B cell (primary cell): ENCODE measurements at regions of chr5 and their contacts with region 1.

Region 1: DNA sequence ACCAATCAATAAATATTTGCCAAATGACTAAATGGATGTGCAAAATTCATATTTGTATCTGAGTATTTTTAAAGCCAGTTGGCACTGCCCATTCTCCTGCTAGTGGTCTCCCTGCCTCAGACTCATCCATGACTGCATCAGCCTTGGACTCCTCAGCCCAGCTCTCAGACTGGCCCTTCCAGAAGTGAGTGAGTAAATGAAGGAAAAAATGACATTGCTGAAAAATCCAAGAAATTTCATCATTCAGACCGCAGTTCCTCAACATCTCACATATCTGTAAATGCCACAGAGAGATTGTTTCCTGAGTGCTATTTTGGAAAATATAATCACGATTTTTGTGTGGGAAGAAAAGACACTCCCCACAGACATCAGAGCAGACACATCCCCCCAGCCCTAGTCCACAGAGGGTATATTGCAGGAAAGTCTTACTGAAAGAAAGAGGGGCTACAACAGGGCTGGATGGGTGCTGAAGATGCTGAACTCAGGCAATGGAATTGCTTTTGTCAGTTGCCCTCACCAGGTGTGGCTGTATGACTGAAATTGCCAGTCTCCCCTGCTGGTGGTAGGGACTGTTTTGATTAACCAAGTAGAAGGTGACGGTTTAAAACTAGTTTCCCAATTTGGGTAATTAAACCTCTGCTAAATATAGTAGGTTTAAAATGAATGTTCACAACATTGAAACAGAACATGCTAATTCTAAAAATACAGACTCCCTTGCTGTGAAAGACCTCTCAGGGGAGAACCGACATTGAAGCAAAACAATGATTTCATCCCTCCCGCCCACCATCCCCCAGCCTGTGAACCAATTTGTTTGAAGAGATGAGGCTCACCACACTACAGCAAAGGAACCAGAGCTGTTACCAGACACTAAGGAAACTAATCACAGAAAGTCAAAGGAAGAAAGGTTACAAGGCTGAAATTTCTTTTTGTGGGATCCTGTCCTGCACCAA is 158.8 kb downstream of the DEPDC1B start:
- DNase-seq: peak; percentile 84
- ATAC-seq: peak; percentile 81
- H3K4me3 ChIP-seq: peak overlapping the region in 3 of 5 experiments; percentile 11 to 21 (median 16)
- H3K4me3 Mint-ChIP-seq: peak overlapping the region; percentile 64
- H3K27ac ChIP-seq: peak overlapping the region; percentile 73 to 82
- H3K27ac Mint-ChIP-seq: peak overlapping the region; percentile 70
- H3K4me1 ChIP-seq: peaks cover 40 to 56% of the 10 kb centered on the region in 2 donors
- H3K4me1 Mint-ChIP-seq: peaks cover 58% of the 10 kb centered on the region
- H3K27me3 ChIP-seq: no peaks in the 10 kb centered on the region
- H3K27me3 Mint-ChIP-seq: no peaks in the 10 kb centered on the region
- CTCF ChIP-seq: no peak

Region 2: GRCh38 chr5:60494635-60495034 is 46.5 kb before region 1 on chr5:
- CTCF ChIA-PET with region 1: no interaction called
- POLR2A ChIA-PET with region 1: no interaction called
- intact Hi-C with region 1: loop called (anchors 5 kb)
- DNase-seq: peak; percentile 62
- ATAC-seq: peak; percentile 82
- H3K4me3 ChIP-seq: no peak overlapping the region
- H3K4me3 Mint-ChIP-seq: peak overlapping the region; percentile 26
- H3K27ac ChIP-seq: peak overlapping the region in 1 of 2 donors; percentile 37
- H3K27ac Mint-ChIP-seq: no peak overlapping the region
- H3K4me1 ChIP-seq: peaks cover 24 to 26% of the 10 kb centered on the region in 2 donors
- H3K4me1 Mint-ChIP-seq: peaks cover 37% of the 10 kb centered on the region
- H3K27me3 ChIP-seq: no peaks in the 10 kb centered on the region
- H3K27me3 Mint-ChIP-seq: no peaks in the 10 kb centered on the region
- CTCF ChIP-seq: no peak

Region 3: DNA sequence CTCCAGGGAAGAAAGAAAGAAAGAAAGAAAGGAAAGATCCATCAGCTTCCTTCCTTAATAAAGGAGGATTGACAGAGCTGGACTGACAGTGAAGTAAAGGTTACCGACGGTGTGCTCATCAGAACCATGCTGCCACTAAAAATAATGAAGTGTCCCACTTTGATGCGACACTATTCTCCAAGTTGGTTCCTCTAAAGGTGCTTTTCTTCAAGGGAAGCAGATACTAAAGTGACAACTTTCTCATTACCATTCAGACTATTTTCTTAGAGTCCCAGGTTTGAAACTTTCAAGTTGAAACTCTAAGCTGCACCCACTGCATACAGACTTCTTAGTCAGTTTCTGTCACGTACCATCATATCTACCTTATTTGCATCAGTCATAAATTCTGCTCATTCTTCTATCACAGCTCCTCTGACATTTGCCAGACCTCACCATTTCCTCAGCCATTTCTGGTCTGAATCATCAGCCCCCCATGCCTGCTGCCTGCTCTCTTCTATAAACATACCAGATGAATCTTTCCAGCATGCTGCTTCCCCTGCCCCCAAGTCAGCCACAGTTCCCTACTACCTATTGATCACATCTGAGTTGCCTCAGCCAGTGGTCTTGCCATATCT is 18.7 kb before region 1 on chr5:
- CTCF ChIA-PET with region 1: interaction called, 4 read pairs
- POLR2A ChIA-PET with region 1: no interaction called
- intact Hi-C with region 1: loop called (anchors 1 kb)
- DNase-seq: peak; percentile 43
- ATAC-seq: peak; percentile 59
- H3K4me3 ChIP-seq: peak overlapping the region; percentile 39 to 65 (median 58)
- H3K4me3 Mint-ChIP-seq: no peak overlapping the region
- H3K27ac ChIP-seq: peak overlapping the region; percentile 88
- H3K27ac Mint-ChIP-seq: no peak overlapping the region
- H3K4me1 ChIP-seq: peaks cover 45 to 56% of the 10 kb centered on the region in 2 donors
- H3K4me1 Mint-ChIP-seq: peaks cover 37% of the 10 kb centered on the region
- H3K27me3 ChIP-seq: no peaks in the 10 kb centered on the region
- H3K27me3 Mint-ChIP-seq: no peaks in the 10 kb centered on the region
- CTCF ChIP-seq: no peak

Region 4: GRCh38 chr5:60586307-60586901 is 45.3 kb after region 1 on chr5:
- CTCF ChIA-PET with region 1: no interaction called
- POLR2A ChIA-PET with region 1: no interaction called
- intact Hi-C with region 1: loop called (anchors 5 kb)
- DNase-seq: peak; percentile 54
- ATAC-seq: no peak
- H3K4me3 ChIP-seq: no peak overlapping the region
- H3K4me3 Mint-ChIP-seq: no peak overlapping the region
- H3K27ac ChIP-seq: no peak overlapping the region
- H3K27ac Mint-ChIP-seq: no peak overlapping the region
- H3K4me1 ChIP-seq: peaks cover 9 to 10% of the 10 kb centered on the region in 2 donors
- H3K4me1 Mint-ChIP-seq: peaks cover 15% of the 10 kb centered on the region
- H3K27me3 ChIP-seq: no peaks in the 10 kb centered on the region
- H3K27me3 Mint-ChIP-seq: no peaks in the 10 kb centered on the region
- CTCF ChIP-seq: peak; percentile 75